Pancreas (tissue), 10 donors: ENCODE measurements at regions of chr5 and their contacts with region 1.

Region 1: DNA sequence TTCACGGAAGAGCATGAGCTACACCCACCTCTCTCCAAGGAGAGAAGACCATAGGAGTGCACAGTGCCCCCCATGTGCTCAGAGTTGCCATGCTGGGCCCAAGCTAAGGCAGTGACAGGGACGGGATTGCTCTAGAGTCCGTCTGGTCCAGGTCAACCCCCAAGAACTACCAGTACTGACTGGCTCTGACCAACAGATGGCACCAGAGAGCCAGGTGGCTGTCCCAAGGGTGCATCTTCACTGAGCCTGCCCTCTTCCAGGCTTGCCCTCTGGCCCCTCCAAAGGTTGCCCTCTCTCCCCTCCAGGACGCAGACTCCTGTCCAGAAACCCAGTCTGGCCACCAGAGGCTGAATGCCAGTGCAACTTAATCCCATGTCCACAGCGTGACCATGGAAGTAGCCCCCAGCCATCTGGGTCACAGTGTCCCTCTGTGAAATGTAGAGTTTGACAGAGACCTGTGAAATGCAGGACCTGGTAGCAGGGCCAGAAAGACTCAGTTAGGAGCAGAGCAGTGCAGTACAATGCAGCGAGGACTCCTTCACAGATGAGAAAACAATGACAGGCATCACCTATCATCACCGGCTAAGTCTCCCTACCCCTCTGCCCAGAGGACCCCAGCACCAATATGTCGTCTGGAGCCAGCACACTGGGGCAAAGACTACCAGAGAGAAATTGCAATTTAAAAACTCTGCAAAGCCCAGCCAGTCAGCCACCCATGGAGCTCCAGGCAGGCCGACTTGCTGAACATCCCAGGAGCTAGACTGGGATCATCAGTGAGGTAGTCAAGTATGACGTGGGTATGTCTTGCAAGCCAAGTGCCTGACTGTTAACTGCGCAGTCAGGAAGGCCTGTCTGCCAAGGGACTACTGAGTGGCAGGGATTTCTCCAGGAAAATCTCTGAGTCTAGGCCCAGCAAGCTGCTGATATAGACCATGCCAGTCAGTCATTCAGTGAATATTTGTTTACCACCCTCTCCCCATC is 7.7 kb upstream of the SKP1 start:
- DNase-seq: peak; percentile 56 to 82 (median 76)
- ATAC-seq: peak; percentile 74 to 94 (median 91)
- H3K4me3 ChIP-seq: no peak overlapping the region
- H3K27ac ChIP-seq: no peak overlapping the region
- H3K4me1 ChIP-seq: peaks cover 0 to 6% (median 0%) of the 10 kb centered on the region in 3 donors
- H3K27me3 ChIP-seq: no peaks in the 10 kb centered on the region
- CTCF ChIP-seq: peak; percentile 84 to 88 (median 87)

Region 2: DNA sequence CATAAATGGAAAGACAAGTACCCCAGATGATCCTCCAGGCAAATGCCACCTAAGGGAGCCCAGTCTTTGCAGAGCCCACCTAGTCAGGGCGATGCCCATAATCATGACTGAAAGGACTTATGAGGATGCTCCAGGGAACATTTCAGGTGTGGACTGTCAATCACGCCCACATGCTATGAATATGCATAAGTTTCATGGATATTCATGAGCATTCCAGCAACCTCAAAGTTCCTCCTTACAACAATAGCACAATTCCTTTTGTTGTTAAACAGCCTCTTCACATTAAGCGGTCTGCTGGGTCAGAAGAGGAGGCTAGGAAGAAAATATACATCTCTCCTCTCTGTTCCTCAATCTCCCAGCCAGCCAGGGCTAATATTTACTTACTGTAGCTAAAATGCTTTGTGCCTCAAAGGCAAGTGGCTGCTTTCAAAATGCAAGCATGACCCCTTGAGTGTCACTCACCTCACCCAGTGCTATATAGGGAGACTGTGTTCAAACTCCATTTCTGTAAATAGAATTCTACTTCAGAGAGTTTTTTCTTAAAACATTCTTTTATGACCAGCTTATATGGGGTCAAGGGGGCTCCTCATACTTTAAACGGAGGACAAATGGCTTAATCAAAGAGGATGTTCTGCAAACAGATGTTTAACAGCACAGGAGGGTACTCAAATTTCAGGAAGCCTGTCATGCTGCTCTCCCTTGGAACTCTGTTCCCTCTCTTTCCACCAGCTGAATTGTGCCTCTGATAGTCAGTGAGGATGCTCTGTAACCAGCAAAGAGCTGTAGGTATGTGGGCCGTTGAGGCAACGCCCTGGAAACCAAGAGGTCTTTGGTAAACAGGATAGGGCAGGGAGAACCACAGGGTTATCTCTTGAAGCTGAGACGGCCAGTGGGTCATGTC is 377.3 kb before region 1 on chr5:
- intact Hi-C with region 1: no loop called
- DNase-seq: no peak
- ATAC-seq: no peak
- H3K4me3 ChIP-seq: no peak overlapping the region
- H3K27ac ChIP-seq: no peak overlapping the region
- H3K4me1 ChIP-seq: no peaks in the 10 kb centered on the region
- H3K27me3 ChIP-seq: no peaks in the 10 kb centered on the region
- CTCF ChIP-seq: no peak

Region 3: DNA sequence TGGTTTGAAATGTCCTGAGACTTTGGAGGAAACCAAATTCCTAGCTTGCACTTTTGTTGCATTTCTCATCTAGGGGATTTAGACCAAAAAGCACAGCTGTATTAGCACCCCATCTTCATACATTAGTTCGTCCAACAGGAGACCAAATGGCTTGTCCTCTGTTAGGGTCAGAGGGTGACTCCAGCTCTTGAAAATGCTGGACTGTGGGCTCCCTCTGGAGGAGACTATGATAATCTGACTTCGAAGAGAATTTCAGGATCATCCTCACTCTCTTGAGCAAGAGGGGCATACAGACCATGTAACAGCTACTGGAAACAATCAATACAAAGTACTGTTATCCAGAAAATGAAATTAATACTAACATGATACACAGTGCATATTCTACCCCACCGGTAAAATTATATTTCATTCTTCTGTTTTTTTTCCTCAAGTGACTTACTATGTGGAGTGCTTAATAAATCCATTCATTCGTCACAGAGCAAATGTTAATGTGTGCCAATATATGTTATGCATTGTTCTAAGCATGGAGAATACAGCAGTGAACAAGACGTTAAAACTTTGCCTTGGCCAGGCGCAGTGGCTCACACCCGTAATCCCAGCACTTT is 105.2 kb after region 1 on chr5:
- intact Hi-C with region 1: loop called (anchors 5 to 10 kb)
- DNase-seq: peak in 3 of 6 donors; percentile 34 to 60 (median 39)
- ATAC-seq: peak; percentile 79 to 100 (median 98)
- H3K4me3 ChIP-seq: no peak overlapping the region
- H3K27ac ChIP-seq: no peak overlapping the region
- H3K4me1 ChIP-seq: no peaks in the 10 kb centered on the region
- H3K27me3 ChIP-seq: no peaks in the 10 kb centered on the region
- CTCF ChIP-seq: peak in 3 of 4 donors; percentile 15 to 49 (median 43)

Region 4: DNA sequence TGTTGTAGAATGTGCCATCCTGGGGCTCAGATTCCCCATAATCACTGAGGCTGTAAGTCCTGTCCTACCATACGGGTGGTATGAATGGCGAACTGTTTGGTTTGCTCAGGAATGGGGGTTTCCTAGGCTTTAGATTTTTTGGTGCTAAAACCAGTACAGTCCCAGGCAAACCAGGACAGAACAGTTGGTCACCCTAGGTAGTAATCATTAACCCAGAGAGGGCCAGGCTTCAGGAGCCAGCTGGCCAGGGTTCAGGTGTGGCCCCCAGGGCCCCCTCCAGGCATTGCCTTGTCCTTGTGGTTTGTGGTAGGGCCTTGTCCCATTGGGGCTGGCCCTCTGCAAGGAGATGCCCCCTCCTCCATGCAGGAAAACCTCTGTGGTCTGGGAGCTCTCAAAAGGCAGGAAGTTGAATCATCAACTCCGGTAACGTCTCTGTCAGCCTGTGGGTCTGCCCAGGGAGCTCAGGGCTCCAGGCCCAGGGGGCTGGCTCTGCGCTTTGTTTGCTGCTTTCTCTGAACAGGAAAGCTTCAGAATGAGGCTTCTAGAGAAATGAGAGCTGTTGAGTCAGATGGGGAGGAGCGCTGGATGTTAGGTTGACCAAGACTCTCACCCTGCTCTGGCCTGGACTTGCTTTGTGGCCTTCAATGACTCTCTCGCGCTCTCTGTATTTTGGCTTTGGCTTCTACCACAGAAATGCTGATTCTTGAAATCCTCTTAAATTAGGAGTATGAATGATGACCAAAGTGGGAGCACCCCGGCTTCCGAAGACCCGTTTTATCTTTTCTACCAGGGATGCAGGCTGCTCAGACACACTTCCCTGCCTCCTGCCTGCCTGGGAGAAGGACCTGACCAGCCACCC is 318.9 kb after region 1 on chr5:
- intact Hi-C with region 1: no loop called
- DNase-seq: peak in 5 of 6 donors; percentile 42 to 74 (median 55)
- ATAC-seq: peak in 3 of 4 donors; percentile 34 to 65 (median 35)
- H3K4me3 ChIP-seq: no peak overlapping the region
- H3K27ac ChIP-seq: peak overlapping the region; percentile 33 to 88 (median 66)
- H3K4me1 ChIP-seq: peaks cover 19 to 39% (median 36%) of the 10 kb centered on the region in 3 donors
- H3K27me3 ChIP-seq: no peaks in the 10 kb centered on the region
- CTCF ChIP-seq: no peak